ENCODE measurements at regions of chr1 and their contacts with region 1.

Region 1: GRCh38 chr1:40385437-40386358 is 12.2 kb downstream of the SMAP2 start:
- DNase-seq: peak; percentile 77
- ATAC-seq: peak; percentile 63
- H3K4me3 Mint-ChIP-seq: peak overlapping the region; percentile 74
- H3K27ac Mint-ChIP-seq: peak overlapping the region; percentile 100
- H3K4me1 Mint-ChIP-seq: peaks cover 94% of the 10 kb centered on the region
- H3K27me3 Mint-ChIP-seq: no peaks in the 10 kb centered on the region

Region 2: GRCh38 chr1:39745016-39745670 is 640.6 kb before region 1 on chr1:
- CTCF ChIA-PET with region 1: no interaction called
- POLR2A ChIA-PET with region 1: no interaction called
- intact Hi-C with region 1: no loop called
- DNase-seq: no peak
- ATAC-seq: no peak
- H3K4me3 Mint-ChIP-seq: no peak overlapping the region
- H3K27ac Mint-ChIP-seq: no peak overlapping the region
- H3K4me1 Mint-ChIP-seq: peaks cover 10% of the 10 kb centered on the region
- H3K27me3 Mint-ChIP-seq: no peaks in the 10 kb centered on the region

Region 3: GRCh38 chr1:40040511-40041465 is 344.9 kb before region 1 on chr1 and contains the start of gene CAP1:
- CTCF ChIA-PET with region 1: no interaction called
- POLR2A ChIA-PET with region 1: interaction called, 3 read pairs
- intact Hi-C with region 1: loop called (anchors 5 kb)
- DNase-seq: peak; percentile 100
- ATAC-seq: peak; percentile 93
- H3K4me3 Mint-ChIP-seq: peak within 1 kb of the TSS; percentile 99
- H3K27ac Mint-ChIP-seq: peak within 1 kb of the TSS; percentile 99
- H3K4me1 Mint-ChIP-seq: peaks cover 58% of the 10 kb centered on the region
- H3K27me3 Mint-ChIP-seq: no peaks in the 10 kb centered on the region
- total RNA-seq, gene CAP1: 527 to 553 TPM

Region 4: GRCh38 chr1:40241362-40241761 is 144.3 kb before region 1 on chr1:
- CTCF ChIA-PET with region 1: no interaction called
- POLR2A ChIA-PET with region 1: no interaction called
- intact Hi-C with region 1: loop called in 1 of 2 experiments (anchors 5 kb)
- DNase-seq: no peak
- ATAC-seq: peak; percentile 62
- H3K4me3 Mint-ChIP-seq: peak overlapping the region; percentile 6
- H3K27ac Mint-ChIP-seq: peak overlapping the region; percentile 81
- H3K4me1 Mint-ChIP-seq: peaks cover 52% of the 10 kb centered on the region
- H3K27me3 Mint-ChIP-seq: peaks cover 3% of the 10 kb centered on the region

Region 5: DNA sequence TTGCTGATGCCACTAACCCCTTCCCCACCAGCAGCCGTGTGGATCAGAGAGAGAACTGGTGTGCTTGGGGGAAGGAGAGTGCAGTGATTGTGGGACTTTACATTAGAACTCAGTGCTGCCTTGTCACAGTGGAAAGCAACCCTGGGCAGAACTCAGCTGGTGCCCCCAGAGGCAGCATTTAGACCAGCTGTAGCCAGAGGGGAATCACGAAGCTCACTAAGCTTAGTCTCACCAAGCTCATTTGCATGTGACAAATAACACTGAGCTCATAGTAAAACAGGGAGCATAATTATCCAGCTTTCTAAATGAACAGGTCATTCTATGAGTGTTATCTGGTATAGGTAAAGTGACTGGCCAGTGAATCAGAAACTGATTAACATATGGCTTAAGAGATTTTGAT is 22.0 kb before region 1 on chr1:
- CTCF ChIA-PET with region 1: interaction called, 7 read pairs
- POLR2A ChIA-PET with region 1: interaction called, 19 read pairs
- intact Hi-C with region 1: no loop called
- DNase-seq: peak; percentile 69
- ATAC-seq: peak; percentile 99
- H3K4me3 Mint-ChIP-seq: no peak overlapping the region
- H3K27ac Mint-ChIP-seq: no peak overlapping the region
- H3K4me1 Mint-ChIP-seq: peaks cover 12% of the 10 kb centered on the region
- H3K27me3 Mint-ChIP-seq: no peaks in the 10 kb centered on the region

Region 6: GRCh38 chr1:40449684-40450494 is 64.2 kb after region 1 on chr1 and contains the start of gene ZFP69B:
- CTCF ChIA-PET with region 1: no interaction called
- POLR2A ChIA-PET with region 1: interaction called, 5 read pairs
- intact Hi-C with region 1: loop called (anchors 1 to 2 kb)
- DNase-seq: peak; percentile 96
- ATAC-seq: peak; percentile 67
- H3K4me3 Mint-ChIP-seq: peak within 1 kb of the TSS; percentile 71
- H3K27ac Mint-ChIP-seq: peak within 1 kb of the TSS; percentile 97
- H3K4me1 Mint-ChIP-seq: peaks cover 30% of the 10 kb centered on the region
- H3K27me3 Mint-ChIP-seq: no peaks in the 10 kb centered on the region
- total RNA-seq, gene ZFP69B: 4.6 to 5.3 TPM

Region 7: GRCh38 chr1:41200728-41201127 is 815.0 kb after region 1 on chr1:
- CTCF ChIA-PET with region 1: no interaction called
- POLR2A ChIA-PET with region 1: no interaction called
- intact Hi-C with region 1: no loop called
- DNase-seq: no peak
- ATAC-seq: no peak
- H3K4me3 Mint-ChIP-seq: no peak overlapping the region
- H3K27ac Mint-ChIP-seq: no peak overlapping the region
- H3K4me1 Mint-ChIP-seq: no peaks in the 10 kb centered on the region
- H3K27me3 Mint-ChIP-seq: no peaks in the 10 kb centered on the region

Measured in activated CD4-positive, alpha-beta T cell treated with anti-CD3 and anti-CD28 coated beads for 36 hours (primary cell).